Heart right ventricle (tissue), 16 donors: ENCODE measurements at regions of chr1 and their contacts with region 1.

Region 1: GRCh38 chr1:1890506-1891348 is at the start of gene GNB1:
- DNase-seq: peak; percentile 87 to 91
- ATAC-seq: peak; percentile 81 to 93 (median 88)
- H3K4me3 ChIP-seq: peak within 1 kb of the TSS; percentile 75 to 98 (median 88)
- H3K27ac ChIP-seq: peak within 1 kb of the TSS; percentile 91 to 99 (median 96)
- H3K4me1 ChIP-seq: peaks cover 33 to 80% (median 68%) of the 10 kb centered on the region in 9 donors
- H3K27me3 ChIP-seq: no peaks in the 10 kb centered on the region
- CTCF ChIP-seq: no peak
- total RNA-seq, gene GNB1: 139 to 228 (median 174) TPM

Region 2: DNA sequence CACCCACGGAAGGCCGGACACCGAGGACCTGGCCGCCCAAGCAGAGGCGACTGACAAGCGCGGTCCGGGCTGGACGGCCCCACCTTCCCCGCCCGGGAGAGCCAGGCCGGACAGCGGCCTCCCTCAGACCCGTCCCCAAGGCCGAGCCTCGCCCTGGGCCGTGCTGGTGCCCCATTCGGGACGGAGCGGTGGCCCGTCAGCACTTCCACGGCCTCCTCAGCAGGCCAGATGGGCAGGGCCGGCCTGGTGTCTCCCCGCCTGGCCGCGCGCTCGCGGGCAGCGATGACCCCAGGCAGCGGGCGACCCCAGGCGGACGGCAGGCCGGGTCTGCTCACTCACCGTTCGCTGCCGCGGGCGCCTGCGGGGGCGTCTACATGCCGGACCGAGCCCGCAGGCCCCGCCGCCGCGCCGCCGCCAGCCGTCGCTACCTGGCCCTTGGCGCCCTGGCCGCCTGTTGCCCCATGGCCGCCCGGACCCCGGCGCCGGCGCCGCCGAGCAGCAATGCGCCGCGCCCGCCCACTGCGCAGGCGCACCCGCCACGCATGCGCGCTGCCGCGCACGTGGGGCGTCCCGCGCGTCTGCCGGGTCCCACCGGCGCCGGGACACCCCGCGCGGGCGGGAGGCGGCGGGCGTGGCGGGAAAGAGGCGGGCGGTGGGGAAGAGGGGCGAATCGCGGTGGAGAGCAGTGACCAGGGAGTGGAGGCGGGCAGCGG is 112.6 kb before region 1 on chr1 and contains the start of gene NADK:
- intact Hi-C with region 1: loop called in 3 of 10 experiments (anchors 5 kb)
- DNase-seq: peak; percentile 42 to 74
- ATAC-seq: peak; percentile 23 to 77 (median 51)
- H3K4me3 ChIP-seq: peak within 1 kb of the TSS; percentile 66 to 96 (median 88)
- H3K27ac ChIP-seq: peak within 1 kb of the TSS; percentile 89 to 99 (median 94)
- H3K4me1 ChIP-seq: peaks cover 29 to 81% (median 75%) of the 10 kb centered on the region in 9 donors
- H3K27me3 ChIP-seq: no peaks in the 10 kb centered on the region
- CTCF ChIP-seq: peak in 1 of 9 donors; percentile 21
- total RNA-seq, gene NADK: 15.2 to 40.2 (median 21.9) TPM

Region 3: GRCh38 chr1:1796466-1796865 is 94.3 kb before region 1 on chr1:
- intact Hi-C with region 1: loop called in 1 of 10 experiments (anchors 10 kb)
- DNase-seq: no peak
- ATAC-seq: peak in 3 of 8 donors; percentile 22 to 29 (median 25)
- H3K4me3 ChIP-seq: no peak overlapping the region
- H3K27ac ChIP-seq: no peak overlapping the region
- H3K4me1 ChIP-seq: peaks cover 0 to 23% (median 17%) of the 10 kb centered on the region in 9 donors
- H3K27me3 ChIP-seq: no peaks in the 10 kb centered on the region
- CTCF ChIP-seq: peak in 4 of 9 donors; percentile 18 to 30 (median 23)

Region 4: GRCh38 chr1:1841575-1841995 is 49.1 kb before region 1 on chr1:
- intact Hi-C with region 1: loop called in 4 of 10 experiments (anchors 5 to 10 kb)
- DNase-seq: no peak
- ATAC-seq: peak in 3 of 8 donors; percentile 24 to 46 (median 40)
- H3K4me3 ChIP-seq: peak overlapping the region in 2 of 10 donors; percentile 6 to 13
- H3K27ac ChIP-seq: peak overlapping the region in 3 of 10 donors; percentile 13 to 54 (median 41)
- H3K4me1 ChIP-seq: peaks cover 0 to 80% (median 67%) of the 10 kb centered on the region in 9 donors
- H3K27me3 ChIP-seq: no peaks in the 10 kb centered on the region
- CTCF ChIP-seq: peak in 4 of 9 donors; percentile 6 to 29 (median 16)

Region 5: DNA sequence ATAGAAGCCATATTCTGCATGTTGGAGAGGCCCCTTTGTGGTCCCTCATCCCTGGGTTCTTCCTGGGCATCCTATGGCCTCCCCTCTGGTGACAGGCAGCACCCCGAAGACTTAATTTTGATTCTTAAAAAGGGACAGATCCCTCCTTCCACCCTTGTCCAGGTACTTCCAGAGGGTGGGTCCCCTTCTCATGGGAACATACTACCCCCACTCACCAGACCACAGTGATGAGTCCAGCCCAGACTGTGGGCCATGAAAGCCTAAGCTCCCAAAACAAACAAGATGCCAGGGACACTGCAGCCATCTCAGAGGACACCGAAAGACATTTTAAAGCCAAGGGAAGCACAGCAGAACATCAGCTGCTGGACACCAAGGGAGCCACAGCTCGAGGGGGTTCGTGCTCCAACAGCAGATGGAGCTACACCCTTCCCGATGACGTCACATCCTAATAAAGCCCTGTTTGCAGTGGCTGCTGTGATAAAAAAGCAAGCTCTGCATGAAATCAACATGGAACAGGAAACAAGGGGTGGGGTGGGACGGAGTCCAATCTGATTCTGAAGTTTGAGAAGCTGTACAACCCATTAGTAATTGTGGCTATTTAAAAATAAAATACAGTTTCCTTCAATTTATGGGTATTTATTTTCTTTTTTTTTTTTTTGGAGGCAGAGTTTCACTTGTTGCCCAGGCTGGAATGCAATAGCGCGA is 32.2 kb before region 1 on chr1:
- intact Hi-C with region 1: loop called in 5 of 10 experiments (anchors 2 to 5 kb)
- DNase-seq: peak; percentile 67 to 95
- ATAC-seq: peak; percentile 87 to 94 (median 90)
- H3K4me3 ChIP-seq: peak overlapping the region in 7 of 10 donors; percentile 19 to 48 (median 34)
- H3K27ac ChIP-seq: peak overlapping the region; percentile 73 to 87 (median 82)
- H3K4me1 ChIP-seq: peaks cover 32 to 96% (median 83%) of the 10 kb centered on the region in 9 donors
- H3K27me3 ChIP-seq: no peaks in the 10 kb centered on the region
- CTCF ChIP-seq: peak in 7 of 9 donors; percentile 40 to 82 (median 54)

Region 6: DNA sequence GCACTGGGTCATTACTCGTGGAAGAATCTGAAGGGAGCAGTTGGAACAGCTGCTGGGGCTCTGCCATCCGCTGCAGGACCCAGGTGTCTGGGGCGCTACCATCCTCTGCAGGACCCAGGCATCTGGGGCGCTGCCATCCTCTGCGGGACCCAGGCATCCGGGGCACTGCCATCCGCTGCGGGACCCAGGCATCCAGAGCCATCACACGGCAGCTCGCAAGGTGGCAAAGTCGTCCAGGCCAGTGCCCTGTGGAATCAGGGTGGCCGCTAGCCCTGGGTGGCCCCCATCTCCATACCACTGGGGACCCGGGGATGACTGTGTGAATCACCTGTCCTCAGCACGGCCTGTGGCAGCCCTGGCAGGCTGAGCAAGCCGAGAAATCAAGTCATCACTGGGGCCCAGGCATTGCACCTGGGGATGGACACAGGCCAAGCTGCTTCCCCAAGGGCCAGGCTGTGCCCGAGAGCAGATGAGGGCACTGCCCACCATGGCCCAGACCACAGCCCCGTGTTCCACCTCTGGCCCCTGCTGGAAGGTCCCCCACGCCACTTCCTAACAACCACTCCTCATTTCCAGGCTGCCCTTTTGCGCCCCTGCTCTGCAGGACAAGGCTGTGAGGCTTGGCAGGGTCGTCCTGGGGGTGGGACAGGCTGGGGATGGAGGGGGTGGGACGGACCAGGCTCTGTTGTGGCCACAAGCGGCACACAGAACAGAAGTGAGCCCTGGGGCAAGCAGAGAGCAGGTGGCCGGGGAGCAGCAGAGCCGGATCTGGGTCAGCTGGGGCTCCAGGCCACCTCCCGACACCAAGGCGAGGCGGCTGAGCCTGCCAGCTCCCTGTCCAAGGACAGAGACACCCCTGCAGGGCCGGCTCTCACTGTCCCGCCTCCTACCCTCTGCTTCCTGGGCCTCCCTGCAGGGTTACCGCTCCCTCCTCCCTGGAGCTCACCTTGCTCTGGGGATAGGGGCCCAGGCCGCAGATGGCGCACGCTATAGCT is 141.1 kb after region 1 on chr1:
- intact Hi-C with region 1: no loop called
- DNase-seq: no peak
- ATAC-seq: peak in 7 of 8 donors; percentile 30 to 66 (median 45)
- H3K4me3 ChIP-seq: no peak overlapping the region
- H3K27ac ChIP-seq: peak overlapping the region in 1 of 10 donors; percentile 47
- H3K4me1 ChIP-seq: peaks cover 0 to 10% (median 0%) of the 10 kb centered on the region in 9 donors
- H3K27me3 ChIP-seq: no peaks in the 10 kb centered on the region
- CTCF ChIP-seq: no peak